ENCODE measurements at regions of chr2 and their contacts with region 1.

Region 1: GRCh38 chr2:46164581-46165301 is 132.5 kb upstream of the EPAS1 start:
- DNase-seq: no peak

Region 2: GRCh38 chr2:45935791-45936622 is 228.7 kb before region 1 on chr2:
- intact Hi-C with region 1: no loop called
- DNase-seq: peak; percentile 92

Region 3: GRCh38 chr2:46036929-46037328 is 127.8 kb before region 1 on chr2:
- intact Hi-C with region 1: no loop called
- DNase-seq: no peak

Region 4: GRCh38 chr2:46200220-46200621 is 35.5 kb after region 1 on chr2:
- intact Hi-C with region 1: loop called (anchors 1 kb)
- DNase-seq: no peak

Region 5: DNA sequence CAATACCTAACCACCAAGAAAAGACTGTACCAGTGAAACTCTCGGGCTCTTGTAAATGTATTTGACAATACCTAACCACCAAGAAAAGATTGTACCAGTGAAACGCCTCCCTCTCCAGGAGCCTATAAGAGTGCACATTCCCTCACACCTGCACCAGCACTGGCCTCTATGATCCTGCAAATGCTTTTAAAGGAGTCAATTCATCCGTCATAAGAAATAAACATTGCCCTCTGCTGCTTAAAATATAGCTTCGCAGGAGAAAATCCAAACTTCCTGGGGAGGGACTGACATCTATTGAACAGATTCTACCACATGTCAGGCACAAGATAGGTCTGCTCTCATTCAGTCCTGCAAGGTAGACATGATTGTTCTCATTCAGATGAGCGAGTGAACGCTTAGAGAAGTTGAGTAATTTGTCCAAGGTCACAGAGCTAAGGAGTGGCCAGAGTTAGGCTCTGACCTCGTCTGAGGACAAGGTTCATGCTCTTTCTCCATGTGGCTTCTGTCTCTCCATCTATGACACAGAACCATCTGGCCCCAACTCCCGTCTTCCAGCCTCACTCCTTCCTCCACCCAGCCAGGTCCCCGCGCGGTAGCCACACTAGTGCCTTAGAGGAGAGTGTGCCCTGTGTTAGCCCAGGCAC is 712.1 kb after region 1 on chr2:
- intact Hi-C with region 1: no loop called
- DNase-seq: no peak